ENCODE measurements at regions of chr3 and their contacts with region 1.

Region 1: GRCh38 chr3:167406875-167407492 is 26.9 kb upstream of the ZBBX start:
- DNase-seq: peak; percentile 64 to 81 (median 79)
- H3K4me3 ChIP-seq: no peak overlapping the region
- H3K27ac ChIP-seq: no peak overlapping the region
- H3K4me1 ChIP-seq: no peaks in the 10 kb centered on the region
- H3K27me3 ChIP-seq: no peaks in the 10 kb centered on the region

Region 2: GRCh38 chr3:167684388-167684993 is 277.5 kb after region 1 on chr3:
- CTCF ChIA-PET with region 1: interaction called, 30 read pairs
- POLR2A ChIA-PET with region 1: no interaction called
- DNase-seq: peak; percentile 67 to 83 (median 72)
- H3K4me3 ChIP-seq: no peak overlapping the region
- H3K27ac ChIP-seq: no peak overlapping the region
- H3K4me1 ChIP-seq: no peaks in the 10 kb centered on the region
- H3K27me3 ChIP-seq: no peaks in the 10 kb centered on the region

Region 3: DNA sequence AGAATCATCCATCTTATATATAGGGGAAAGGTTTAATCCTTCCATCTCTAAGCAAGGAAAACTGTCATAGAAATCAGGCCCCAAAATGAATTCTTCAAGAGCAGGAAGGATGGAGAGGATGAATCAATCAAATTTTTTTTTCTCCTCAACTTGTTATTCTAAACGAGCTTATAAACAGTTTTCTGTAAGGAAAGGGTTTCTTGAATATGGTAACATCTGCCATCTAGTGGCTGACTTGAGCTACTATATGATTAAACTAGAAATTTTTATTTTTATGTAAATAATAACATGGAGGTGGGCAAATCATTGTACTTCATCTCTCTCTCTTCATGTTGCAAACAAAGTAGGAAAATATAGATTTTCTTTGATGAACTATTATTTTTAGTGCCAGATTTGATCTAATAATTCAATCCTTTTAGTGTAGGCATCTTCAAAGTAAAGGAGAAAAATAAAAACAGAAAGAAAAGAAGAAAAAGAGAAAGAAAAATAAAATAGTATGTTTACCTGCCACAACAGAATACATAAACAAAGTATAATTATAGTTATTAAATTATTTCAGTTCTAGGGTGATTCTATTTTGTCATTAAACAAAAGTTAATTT is 475.2 kb after region 1 on chr3:
- CTCF ChIA-PET with region 1: interaction called, 15 read pairs
- POLR2A ChIA-PET with region 1: no interaction called
- DNase-seq: peak; percentile 65 to 83 (median 81)
- H3K4me3 ChIP-seq: peak overlapping the region in 1 of 7 experiments; percentile 31
- H3K27ac ChIP-seq: no peak overlapping the region
- H3K4me1 ChIP-seq: peaks cover 0 to 2% (median under 1%) of the 10 kb centered on the region in 4 experiments
- H3K27me3 ChIP-seq: no peaks in the 10 kb centered on the region